Right ventricle myocardium superior (tissue), 1 donor: ENCODE measurements at regions of chr7 and their contacts with region 1.

Region 1: GRCh38 chr7:114085592-114086501 is 167.0 kb upstream of the PPP1R3A start:
- DNase-seq: peak; percentile 87
- ATAC-seq: peak; percentile 83

Region 2: GRCh38 chr7:114414156-114415063 is 328.6 kb after region 1 on chr7 and contains the start of gene FOXP2:
- intact Hi-C with region 1: loop called (anchors 10 kb)
- DNase-seq: no peak
- ATAC-seq: peak; percentile 59
- total RNA-seq, gene FOXP2: 2.3 TPM